Naive thymus-derived CD4-positive, alpha-beta T cell (primary cell): ENCODE measurements at regions of chr19 and their contacts with region 1.

Region 1: GRCh38 chr19:32580901-32581703 is at the start of gene PDCD5:
- DNase-seq: peak; percentile 88 to 96 (median 93)
- ATAC-seq: peak; percentile 98
- H3K4me3 ChIP-seq: peak within 1 kb of the TSS; percentile 91
- H3K4me3 Mint-ChIP-seq: peak within 1 kb of the TSS; percentile 89 to 99 (median 94)
- H3K27ac ChIP-seq: peak within 1 kb of the TSS; percentile 77
- H3K27ac Mint-ChIP-seq: peak within 1 kb of the TSS; percentile 75 to 95 (median 90)
- H3K4me1 ChIP-seq: peaks cover 13 to 19% of the 10 kb centered on the region in 2 donors
- H3K4me1 Mint-ChIP-seq: peaks cover 10 to 46% (median 36%) of the 10 kb centered on the region in 7 donors
- H3K27me3 ChIP-seq: no peaks in the 10 kb centered on the region
- H3K27me3 Mint-ChIP-seq: peaks cover 0 to 20% (median 0%) of the 10 kb centered on the region in 5 donors
- total RNA-seq, gene PDCD5: 19.5 to 98.0 (median 51.2) TPM

Region 2: GRCh38 chr19:31349160-31349881 is 1231.8 kb before region 1 on chr19 and contains the start of gene TSHZ3:
- CTCF ChIA-PET with region 1: no interaction called
- POLR2A ChIA-PET with region 1: no interaction called
- intact Hi-C with region 1: loop called (anchors 2 to 10 kb)
- DNase-seq: peak in 6 of 9 donors; percentile 32 to 66 (median 46)
- ATAC-seq: peak; percentile 66
- H3K4me3 ChIP-seq: peak within 1 kb of the TSS; percentile 57
- H3K4me3 Mint-ChIP-seq: peak within 1 kb of the TSS; percentile 71 to 93 (median 84)
- H3K27ac ChIP-seq: no peak within 1 kb of the TSS
- H3K27ac Mint-ChIP-seq: peak within 1 kb of the TSS in 1 of 9 donors; percentile 23
- H3K4me1 ChIP-seq: peaks cover 19 to 22% of the 10 kb centered on the region in 2 donors
- H3K4me1 Mint-ChIP-seq: peaks cover 28 to 40% (median 35%) of the 10 kb centered on the region in 7 donors
- H3K27me3 ChIP-seq: peaks cover 30 to 36% of the 10 kb centered on the region in 2 donors
- H3K27me3 Mint-ChIP-seq: peaks cover 51 to 75% (median 61%) of the 10 kb centered on the region in 5 donors
- total RNA-seq, gene TSHZ3: 0.08 to 6.0 (median 0.19) TPM

Region 3: DNA sequence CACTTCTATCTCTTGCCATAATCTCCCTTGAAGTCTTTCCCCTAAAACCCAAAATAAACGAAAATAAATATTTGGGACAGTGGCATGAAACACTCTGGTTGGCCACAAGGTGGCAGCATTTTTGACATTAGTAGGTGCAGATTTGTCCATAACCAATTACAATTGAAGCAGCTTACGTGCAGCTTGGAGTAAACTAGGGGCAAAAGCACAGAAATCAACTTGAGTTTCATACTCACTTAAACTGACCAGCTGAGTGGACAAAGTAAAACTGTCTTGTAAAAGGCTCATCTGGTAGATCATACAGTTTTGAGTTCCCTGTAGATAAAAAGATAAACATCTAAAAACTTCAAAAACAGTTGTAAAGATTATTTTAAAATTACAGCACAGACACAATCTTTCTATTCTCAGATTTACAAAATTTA is 18.6 kb after region 1 on chr19:
- CTCF ChIA-PET with region 1: interaction called, 3 read pairs
- POLR2A ChIA-PET with region 1: interaction called, 3 read pairs
- intact Hi-C with region 1: loop called in 1 of 2 experiments (anchors 1 kb)
- DNase-seq: peak in 7 of 9 donors; percentile 22 to 63 (median 58)
- ATAC-seq: peak; percentile 72
- H3K4me3 ChIP-seq: no peak overlapping the region
- H3K4me3 Mint-ChIP-seq: no peak overlapping the region
- H3K27ac ChIP-seq: no peak overlapping the region
- H3K27ac Mint-ChIP-seq: peak overlapping the region in 2 of 9 donors; percentile 3 to 66
- H3K4me1 ChIP-seq: no peaks in the 10 kb centered on the region
- H3K4me1 Mint-ChIP-seq: peaks cover 5 to 8% (median 7%) of the 10 kb centered on the region in 7 donors
- H3K27me3 ChIP-seq: no peaks in the 10 kb centered on the region
- H3K27me3 Mint-ChIP-seq: no peaks in the 10 kb centered on the region

Region 4: GRCh38 chr19:32691291-32691951 is 110.3 kb after region 1 on chr19 and contains the start of gene NUDT19:
- CTCF ChIA-PET with region 1: no interaction called
- POLR2A ChIA-PET with region 1: interaction called, 3 read pairs
- intact Hi-C with region 1: loop called in 1 of 2 experiments (anchors 2 kb)
- DNase-seq: peak; percentile 50 to 82 (median 62)
- ATAC-seq: peak; percentile 87
- H3K4me3 ChIP-seq: peak within 1 kb of the TSS; percentile 50
- H3K4me3 Mint-ChIP-seq: peak within 1 kb of the TSS; percentile 83 to 97 (median 92)
- H3K27ac ChIP-seq: peak within 1 kb of the TSS; percentile 68
- H3K27ac Mint-ChIP-seq: peak within 1 kb of the TSS; percentile 37 to 93 (median 85)
- H3K4me1 ChIP-seq: peaks cover 20 to 24% of the 10 kb centered on the region in 2 donors
- H3K4me1 Mint-ChIP-seq: peaks cover 35 to 52% (median 47%) of the 10 kb centered on the region in 7 donors
- H3K27me3 ChIP-seq: no peaks in the 10 kb centered on the region
- H3K27me3 Mint-ChIP-seq: no peaks in the 10 kb centered on the region
- total RNA-seq, gene NUDT19: 8.4 to 17.0 (median 9.0) TPM

Region 5: GRCh38 chr19:33080761-33081681 is 499.9 kb after region 1 on chr19 and contains the start of gene GPATCH1:
- CTCF ChIA-PET with region 1: no interaction called
- POLR2A ChIA-PET with region 1: interaction called, 4 read pairs
- intact Hi-C with region 1: loop called in 1 of 2 experiments (anchors 1 kb)
- DNase-seq: peak; percentile 79 to 92 (median 85)
- ATAC-seq: peak; percentile 99
- H3K4me3 ChIP-seq: peak within 1 kb of the TSS; percentile 98
- H3K4me3 Mint-ChIP-seq: peak within 1 kb of the TSS; percentile 92 to 99 (median 94)
- H3K27ac ChIP-seq: peak within 1 kb of the TSS; percentile 84
- H3K27ac Mint-ChIP-seq: peak within 1 kb of the TSS; percentile 89 to 99 (median 94)
- H3K4me1 ChIP-seq: peaks cover 10 to 11% of the 10 kb centered on the region in 2 donors
- H3K4me1 Mint-ChIP-seq: peaks cover 20 to 39% (median 30%) of the 10 kb centered on the region in 7 donors
- H3K27me3 ChIP-seq: no peaks in the 10 kb centered on the region
- H3K27me3 Mint-ChIP-seq: no peaks in the 10 kb centered on the region
- total RNA-seq, gene GPATCH1: 11.2 to 20.0 (median 14.4) TPM

Region 6: GRCh38 chr19:33521480-33522370 is 940.6 kb after region 1 on chr19 and contains the start of gene PEPD:
- CTCF ChIA-PET with region 1: no interaction called
- POLR2A ChIA-PET with region 1: no interaction called
- intact Hi-C with region 1: loop called in 1 of 2 experiments (anchors 2 kb)
- DNase-seq: peak; percentile 53 to 82 (median 62)
- ATAC-seq: peak; percentile 95
- H3K4me3 ChIP-seq: peak within 1 kb of the TSS; percentile 82
- H3K4me3 Mint-ChIP-seq: peak within 1 kb of the TSS; percentile 75 to 91 (median 88)
- H3K27ac ChIP-seq: peak within 1 kb of the TSS; percentile 65
- H3K27ac Mint-ChIP-seq: peak within 1 kb of the TSS; percentile 69 to 95 (median 83)
- H3K4me1 ChIP-seq: peaks cover 13 to 14% of the 10 kb centered on the region in 2 donors
- H3K4me1 Mint-ChIP-seq: peaks cover 17 to 29% (median 25%) of the 10 kb centered on the region in 7 donors
- H3K27me3 ChIP-seq: no peaks in the 10 kb centered on the region
- H3K27me3 Mint-ChIP-seq: peaks cover 0 to 10% (median 0%) of the 10 kb centered on the region in 5 donors
- total RNA-seq, gene PEPD: 21.9 to 35.6 (median 24.5) TPM